Left colon (tissue), 2 donors: ENCODE measurements at regions of chr11 and their contacts with region 1.

Region 1: GRCh38 chr11:110376711-110377324 is 52.9 kb upstream of the FDX1 start:
- DNase-seq: peak; percentile 67 to 68
- ATAC-seq: peak; percentile 92

Region 2: DNA sequence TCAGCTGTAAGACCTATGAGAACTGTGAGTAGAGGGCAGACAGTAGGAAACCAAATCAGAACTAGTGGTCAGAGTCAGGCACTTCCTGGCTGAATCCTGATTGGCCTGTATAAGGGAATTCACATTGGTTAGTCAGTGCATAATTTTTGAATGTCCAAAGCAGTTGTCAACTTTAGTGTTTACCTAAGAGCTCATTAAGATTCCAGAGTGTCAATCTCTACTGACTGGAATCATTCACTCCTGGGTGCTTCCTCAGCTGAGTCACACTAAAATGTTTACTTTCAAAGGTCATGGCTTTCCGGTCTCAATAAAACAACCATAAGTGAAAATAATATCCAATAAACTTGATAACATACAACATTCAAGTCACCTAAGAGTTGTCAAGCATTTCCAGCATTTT is 648.8 kb before region 1 on chr11:
- intact Hi-C with region 1: no loop called
- DNase-seq: no peak
- ATAC-seq: peak; percentile 96

Region 3: GRCh38 chr11:109946322-109946846 is 430.4 kb before region 1 on chr11:
- intact Hi-C with region 1: loop called in 1 of 2 experiments (anchors 10 kb)
- DNase-seq: peak; percentile 78 to 89
- ATAC-seq: peak; percentile 100

Region 4: GRCh38 chr11:110199184-110199941 is 177.5 kb before region 1 on chr11:
- intact Hi-C with region 1: loop called in 1 of 2 experiments (anchors 2 kb)
- DNase-seq: no peak
- ATAC-seq: no peak

Region 5: DNA sequence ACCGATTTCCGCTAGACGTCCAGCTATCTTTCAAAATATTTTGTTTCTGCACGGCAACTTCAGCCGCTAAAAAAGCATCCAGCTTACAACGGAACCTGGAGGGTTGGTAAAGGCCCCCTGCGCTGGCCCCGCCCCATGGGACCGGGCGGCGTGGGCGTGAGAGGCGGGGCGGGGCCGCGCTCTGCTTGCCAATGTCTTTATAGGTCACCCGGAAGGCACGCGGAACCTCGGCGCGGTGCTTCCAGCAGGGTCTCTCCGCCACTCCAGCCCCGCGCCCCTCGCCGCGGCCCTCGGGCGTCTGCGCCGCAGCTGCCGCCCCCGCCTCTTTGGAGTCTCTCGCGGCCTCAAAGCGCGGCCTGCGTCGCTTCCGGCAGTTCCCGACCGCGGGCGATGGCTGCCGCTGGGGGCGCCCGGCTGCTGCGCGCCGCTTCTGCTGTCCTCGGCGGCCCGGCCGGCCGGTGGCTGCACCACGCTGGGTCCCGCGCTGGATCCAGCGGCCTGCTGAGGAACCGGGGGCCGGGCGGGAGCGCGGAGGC is 53.0 kb after region 1 on chr11 and contains the start of gene FDX1:
- intact Hi-C with region 1: loop called in 1 of 2 experiments (anchors 10 kb)
- DNase-seq: peak; percentile 77 to 88
- ATAC-seq: peak; percentile 84
- total RNA-seq, gene FDX1: 22.6 to 24.0 TPM

Region 6: GRCh38 chr11:110691926-110692325 is 315.1 kb after region 1 on chr11:
- intact Hi-C with region 1: no loop called
- DNase-seq: no peak
- ATAC-seq: no peak

Region 7: DNA sequence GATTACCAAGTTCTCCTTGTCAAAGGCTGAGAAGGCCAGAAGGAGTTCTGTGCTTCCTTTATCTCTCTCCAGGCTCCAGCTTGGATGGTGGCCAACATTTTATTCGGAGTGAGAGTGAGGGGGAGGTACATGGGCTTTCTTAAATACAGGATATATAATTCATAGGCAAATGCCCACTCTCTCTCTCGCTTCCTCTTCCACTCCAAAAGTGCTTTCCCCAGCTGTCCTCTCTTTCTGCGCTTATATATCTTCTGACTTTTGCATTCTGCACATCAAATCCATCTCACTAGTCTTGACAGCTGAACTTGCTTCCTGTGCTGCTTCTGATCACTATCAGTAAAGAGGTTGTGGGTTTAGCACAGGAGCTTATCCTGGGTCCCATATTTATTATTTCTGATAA is 460.8 kb after region 1 on chr11:
- intact Hi-C with region 1: no loop called
- DNase-seq: no peak
- ATAC-seq: no peak